GM10248 (cell line): ENCODE measurements at regions of chr15 and their contacts with region 1.

Region 1: DNA sequence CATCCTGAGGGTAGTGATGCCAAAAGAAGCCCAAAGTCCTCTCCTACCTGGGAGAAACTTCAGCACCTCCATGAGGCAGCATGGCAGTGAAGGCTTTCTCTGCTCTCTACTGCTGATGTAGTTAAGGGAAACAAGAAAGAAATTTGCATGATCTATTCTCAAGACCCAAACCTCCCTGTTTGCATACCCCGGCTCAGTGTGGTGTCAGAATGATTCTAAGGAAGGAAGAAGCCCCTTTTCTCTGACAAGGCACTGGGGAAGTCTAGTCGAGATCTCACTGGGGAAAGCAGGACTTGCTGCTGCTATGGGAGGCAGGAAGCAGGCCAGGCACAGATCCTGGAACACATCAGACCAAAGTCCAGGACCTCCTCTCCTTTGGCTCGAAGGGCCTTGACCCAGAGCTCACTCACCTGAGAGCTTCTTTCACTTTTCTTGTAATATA is 89.4 kb upstream of the ICE2 start:
- DNase-seq: peak; percentile 56
- CTCF ChIP-seq: no peak

Region 2: GRCh38 chr15:60551781-60552161 is 16.6 kb before region 1 on chr15:
- CTCF ChIA-PET with region 1: interaction called, 11 read pairs
- POLR2A ChIA-PET with region 1: no interaction called
- DNase-seq: no peak
- CTCF ChIP-seq: peak; percentile 23

Region 3: DNA sequence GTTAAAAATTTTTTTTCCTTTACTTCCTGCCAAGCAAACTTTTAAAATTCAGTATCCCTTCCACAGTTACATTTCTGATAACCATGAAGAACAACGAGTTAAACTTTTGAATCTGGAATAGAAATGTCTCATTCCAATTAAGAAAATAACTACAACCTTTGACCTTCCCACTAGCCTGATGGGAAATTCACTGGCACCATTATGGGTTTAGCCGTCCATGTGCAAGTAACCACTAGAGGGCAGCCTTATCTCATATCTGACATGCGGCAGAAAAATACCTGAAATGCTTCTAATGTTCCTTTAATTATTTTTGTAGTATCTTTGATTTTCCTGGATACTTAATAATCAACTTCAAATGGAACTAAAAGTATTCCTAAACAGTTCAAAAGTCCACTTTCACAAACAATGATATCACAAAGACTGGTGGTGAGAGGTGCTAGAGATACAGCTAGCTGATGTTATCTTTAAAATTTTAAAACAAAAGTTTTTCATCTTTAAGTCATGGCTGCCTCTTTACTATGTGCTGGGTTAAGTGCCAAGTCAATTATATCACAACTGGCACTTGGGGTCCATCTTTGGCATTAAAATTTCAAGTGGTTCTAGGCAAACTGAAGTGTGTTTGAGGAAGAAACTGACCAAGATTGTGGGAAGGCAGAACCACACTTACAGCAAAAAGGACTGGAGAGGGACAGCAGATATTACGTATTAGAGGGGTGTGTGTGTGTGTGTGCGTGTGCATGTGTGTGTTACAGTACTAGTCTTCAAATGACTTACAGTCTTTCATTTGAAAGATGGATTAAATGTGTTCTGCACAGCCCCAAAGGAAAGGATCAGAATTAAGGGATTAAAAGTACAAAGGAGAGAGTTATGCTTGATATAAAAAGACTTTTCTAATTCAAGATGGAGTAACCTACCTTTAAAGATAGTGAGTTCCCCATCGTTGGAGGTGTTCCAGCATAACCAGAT is 17.7 kb after region 1 on chr15:
- CTCF ChIA-PET with region 1: interaction called, 73 read pairs
- POLR2A ChIA-PET with region 1: no interaction called
- DNase-seq: peak; percentile 44
- CTCF ChIP-seq: peak; percentile 78

Region 4: GRCh38 chr15:60605879-60606304 is 37.6 kb after region 1 on chr15:
- CTCF ChIA-PET with region 1: no interaction called
- POLR2A ChIA-PET with region 1: no interaction called
- DNase-seq: no peak
- CTCF ChIP-seq: no peak